B cell (primary cell): ENCODE measurements at regions of chr12 and their contacts with region 1.

Region 1: GRCh38 chr12:113048716-113049127 is 7.8 kb upstream of the DTX1 start:
- DNase-seq: peak; percentile 84
- ATAC-seq: peak; percentile 55
- H3K4me3 ChIP-seq: no peak overlapping the region
- H3K4me3 Mint-ChIP-seq: peak overlapping the region; percentile 37
- H3K27ac ChIP-seq: peak overlapping the region; percentile 39 to 53
- H3K27ac Mint-ChIP-seq: peak overlapping the region; percentile 43
- H3K4me1 ChIP-seq: peaks cover 48 to 50% of the 10 kb centered on the region in 2 donors
- H3K4me1 Mint-ChIP-seq: peaks cover 47% of the 10 kb centered on the region
- H3K27me3 ChIP-seq: no peaks in the 10 kb centered on the region
- H3K27me3 Mint-ChIP-seq: peaks cover 5% of the 10 kb centered on the region
- CTCF ChIP-seq: peak; percentile 85

Region 2: DNA sequence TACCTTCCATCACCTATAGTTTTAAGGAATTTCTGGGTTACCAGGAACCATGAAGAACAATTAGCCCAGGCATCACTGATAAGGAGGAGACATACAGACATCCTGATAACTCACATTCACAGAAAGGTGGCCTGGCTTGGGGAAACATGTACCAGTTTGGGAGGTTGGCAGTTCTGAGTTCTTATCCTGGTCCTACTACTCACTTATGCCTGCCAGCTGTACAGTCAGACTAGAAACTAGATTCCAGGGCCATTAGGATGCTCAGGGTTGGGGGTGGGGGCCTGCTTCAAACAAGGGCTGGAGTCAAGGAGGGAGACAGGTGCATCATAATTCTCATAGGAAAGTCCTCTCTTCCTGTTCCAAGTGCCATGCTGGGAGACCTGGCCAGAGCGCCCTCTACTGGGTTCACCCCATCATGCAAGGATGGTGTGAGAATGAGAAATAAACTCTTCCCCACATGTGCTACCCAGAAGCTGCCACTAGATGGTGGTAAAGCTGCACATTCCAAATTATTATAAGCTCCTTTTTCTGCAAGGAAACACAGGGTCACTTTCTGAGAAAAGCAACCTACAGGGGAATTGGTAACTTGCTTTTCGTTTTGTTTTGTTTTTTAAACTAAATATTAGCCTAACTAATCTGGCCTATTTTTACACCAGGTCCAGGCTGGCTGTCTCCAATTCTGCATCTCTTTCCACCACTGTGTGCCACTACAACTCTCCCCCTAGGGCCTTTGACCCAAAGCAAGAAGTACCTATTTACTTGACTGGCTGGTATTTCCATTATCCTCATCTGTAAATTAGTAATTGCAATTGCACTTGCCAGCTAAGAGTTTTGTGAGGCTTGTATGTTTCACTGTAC is 56.0 kb before region 1 on chr12:
- CTCF ChIA-PET with region 1: interaction called, 31 read pairs
- POLR2A ChIA-PET with region 1: no interaction called
- intact Hi-C with region 1: no loop called
- DNase-seq: peak; percentile 73
- ATAC-seq: peak; percentile 76
- H3K4me3 ChIP-seq: no peak overlapping the region
- H3K4me3 Mint-ChIP-seq: no peak overlapping the region
- H3K27ac ChIP-seq: peak overlapping the region in 1 of 2 donors; percentile 40
- H3K27ac Mint-ChIP-seq: peak overlapping the region; percentile 53
- H3K4me1 ChIP-seq: peaks cover 8 to 12% of the 10 kb centered on the region in 2 donors
- H3K4me1 Mint-ChIP-seq: peaks cover 24% of the 10 kb centered on the region
- H3K27me3 ChIP-seq: no peaks in the 10 kb centered on the region
- H3K27me3 Mint-ChIP-seq: no peaks in the 10 kb centered on the region
- CTCF ChIP-seq: peak; percentile 90

Region 3: GRCh38 chr12:113075137-113075683 is 26.5 kb after region 1 on chr12:
- CTCF ChIA-PET with region 1: interaction called, 59 read pairs
- POLR2A ChIA-PET with region 1: interaction called, 3 read pairs
- intact Hi-C with region 1: loop called (anchors 1 kb)
- DNase-seq: peak; percentile 95
- ATAC-seq: peak; percentile 86
- H3K4me3 ChIP-seq: peak overlapping the region in 3 of 5 experiments; percentile 12 to 29 (median 19)
- H3K4me3 Mint-ChIP-seq: peak overlapping the region; percentile 74
- H3K27ac ChIP-seq: peak overlapping the region; percentile 91 to 92
- H3K27ac Mint-ChIP-seq: peak overlapping the region; percentile 91
- H3K4me1 ChIP-seq: peaks cover 95 to 97% of the 10 kb centered on the region in 2 donors
- H3K4me1 Mint-ChIP-seq: peaks cover 89% of the 10 kb centered on the region
- H3K27me3 ChIP-seq: no peaks in the 10 kb centered on the region
- H3K27me3 Mint-ChIP-seq: no peaks in the 10 kb centered on the region
- CTCF ChIP-seq: no peak

Region 4: DNA sequence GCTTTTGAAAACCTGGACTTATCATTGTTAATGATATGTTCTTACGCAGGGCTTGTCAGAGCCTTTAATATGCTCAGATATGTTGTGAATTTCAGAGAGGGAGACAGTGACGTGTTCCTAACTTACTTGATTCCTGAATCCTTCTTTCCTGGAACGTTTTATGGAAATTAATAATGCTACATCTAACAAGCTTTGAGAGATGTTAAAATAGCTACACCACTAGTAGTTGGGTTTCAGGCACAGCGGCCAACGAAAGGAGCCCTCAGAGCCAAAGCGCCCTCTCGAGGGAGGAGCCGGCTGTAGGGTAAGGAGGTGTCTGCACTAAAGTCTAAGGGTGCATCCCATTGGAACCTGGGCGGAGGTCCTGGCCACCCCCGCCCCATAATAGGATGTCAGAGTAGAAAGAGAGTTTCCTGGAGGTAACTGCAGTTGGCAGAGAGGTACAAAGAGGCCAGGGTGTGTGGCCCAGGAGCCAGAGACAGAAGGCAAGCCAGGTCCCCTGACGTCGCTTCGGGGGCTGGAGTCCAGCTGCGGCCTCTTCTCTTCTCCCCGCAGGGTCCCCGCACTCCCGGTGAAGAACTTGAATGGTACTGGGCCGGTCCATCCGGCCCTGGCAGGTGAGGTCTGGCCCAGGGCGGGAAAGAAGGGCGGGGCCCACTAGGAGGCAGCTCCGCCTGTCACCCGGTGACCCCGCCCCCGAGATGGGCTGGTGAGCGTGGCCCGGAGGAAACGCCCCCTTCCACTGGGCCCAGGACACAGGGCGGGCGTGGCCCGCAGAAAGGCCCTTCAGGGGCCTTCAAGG is 44.1 kb after region 1 on chr12:
- CTCF ChIA-PET with region 1: interaction called, 359 read pairs
- POLR2A ChIA-PET with region 1: interaction called, 12 read pairs
- intact Hi-C with region 1: loop called (anchors 1 kb)
- DNase-seq: peak; percentile 72
- ATAC-seq: peak; percentile 69
- H3K4me3 ChIP-seq: peak overlapping the region in 3 of 5 experiments; percentile 5 to 58 (median 38)
- H3K4me3 Mint-ChIP-seq: peak overlapping the region; percentile 74
- H3K27ac ChIP-seq: peak overlapping the region; percentile 56 to 62
- H3K27ac Mint-ChIP-seq: peak overlapping the region; percentile 68
- H3K4me1 ChIP-seq: peaks cover 54 to 61% of the 10 kb centered on the region in 2 donors
- H3K4me1 Mint-ChIP-seq: peaks cover 58% of the 10 kb centered on the region
- H3K27me3 ChIP-seq: no peaks in the 10 kb centered on the region
- H3K27me3 Mint-ChIP-seq: no peaks in the 10 kb centered on the region
- CTCF ChIP-seq: peak; percentile 36

Region 5: DNA sequence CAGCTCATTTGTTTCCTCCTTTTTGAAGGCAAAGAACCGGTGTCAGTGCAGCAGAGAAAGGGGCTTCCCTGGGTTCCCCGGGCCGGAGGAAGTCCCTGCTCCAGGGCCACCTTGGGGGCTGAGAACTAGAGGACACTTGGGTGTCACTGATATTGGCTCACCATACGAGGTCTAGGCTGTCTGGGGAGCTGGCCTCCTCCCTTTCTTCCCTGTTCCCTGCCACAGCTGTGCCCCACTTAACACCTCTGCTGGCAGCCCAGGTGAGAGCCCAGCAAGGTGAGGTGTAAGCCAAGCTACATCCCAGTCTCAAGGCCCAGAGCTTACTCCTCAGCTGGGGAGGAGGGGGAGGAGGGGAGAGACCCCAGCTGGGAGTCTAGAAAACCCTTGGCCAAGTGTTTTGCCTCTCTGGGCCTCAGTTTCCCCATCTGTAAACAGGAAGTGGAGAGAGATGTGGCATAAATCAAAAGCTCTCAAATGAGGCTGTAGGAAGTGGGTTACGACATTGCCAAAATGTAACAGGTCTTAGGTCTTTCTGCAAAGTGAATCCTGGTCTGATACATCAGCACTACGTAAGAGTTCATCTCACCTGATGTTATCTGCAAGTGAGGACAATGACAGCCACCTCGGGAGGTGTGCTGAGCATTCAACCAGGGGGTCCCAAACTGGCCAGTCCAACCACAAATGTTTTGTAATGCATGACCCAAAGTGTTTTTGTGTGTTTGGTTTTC is 61.3 kb after region 1 on chr12:
- CTCF ChIA-PET with region 1: interaction called, 11 read pairs
- POLR2A ChIA-PET with region 1: no interaction called
- intact Hi-C with region 1: no loop called
- DNase-seq: no peak
- ATAC-seq: no peak
- H3K4me3 ChIP-seq: no peak overlapping the region
- H3K4me3 Mint-ChIP-seq: no peak overlapping the region
- H3K27ac ChIP-seq: no peak overlapping the region
- H3K27ac Mint-ChIP-seq: no peak overlapping the region
- H3K4me1 ChIP-seq: no peaks in the 10 kb centered on the region
- H3K4me1 Mint-ChIP-seq: peaks cover under 1% of the 10 kb centered on the region
- H3K27me3 ChIP-seq: no peaks in the 10 kb centered on the region
- H3K27me3 Mint-ChIP-seq: peaks cover 3% of the 10 kb centered on the region
- CTCF ChIP-seq: no peak